Adrenal gland (tissue), 19 donors: ENCODE measurements at regions of chr16 and their contacts with region 1.

Region 1: GRCh38 chr16:88785106-88785924 is at the start of gene PIEZO1:
- DNase-seq: peak; percentile 70 to 80 (median 75)
- H3K4me3 ChIP-seq: peak within 1 kb of the TSS; percentile 31 to 99 (median 52)
- H3K27ac ChIP-seq: peak within 1 kb of the TSS; percentile 47 to 99 (median 79)
- H3K4me1 ChIP-seq: peaks cover 10 to 36% of the 10 kb centered on the region in 2 donors
- H3K27me3 ChIP-seq: no peaks in the 10 kb centered on the region
- CTCF ChIP-seq: peak; percentile 62 to 92 (median 82)
- POLR2A ChIP-seq: peak; percentile 39 to 66
- total RNA-seq, gene PIEZO1: 7.9 to 119 (median 91.6) TPM

Region 2: DNA sequence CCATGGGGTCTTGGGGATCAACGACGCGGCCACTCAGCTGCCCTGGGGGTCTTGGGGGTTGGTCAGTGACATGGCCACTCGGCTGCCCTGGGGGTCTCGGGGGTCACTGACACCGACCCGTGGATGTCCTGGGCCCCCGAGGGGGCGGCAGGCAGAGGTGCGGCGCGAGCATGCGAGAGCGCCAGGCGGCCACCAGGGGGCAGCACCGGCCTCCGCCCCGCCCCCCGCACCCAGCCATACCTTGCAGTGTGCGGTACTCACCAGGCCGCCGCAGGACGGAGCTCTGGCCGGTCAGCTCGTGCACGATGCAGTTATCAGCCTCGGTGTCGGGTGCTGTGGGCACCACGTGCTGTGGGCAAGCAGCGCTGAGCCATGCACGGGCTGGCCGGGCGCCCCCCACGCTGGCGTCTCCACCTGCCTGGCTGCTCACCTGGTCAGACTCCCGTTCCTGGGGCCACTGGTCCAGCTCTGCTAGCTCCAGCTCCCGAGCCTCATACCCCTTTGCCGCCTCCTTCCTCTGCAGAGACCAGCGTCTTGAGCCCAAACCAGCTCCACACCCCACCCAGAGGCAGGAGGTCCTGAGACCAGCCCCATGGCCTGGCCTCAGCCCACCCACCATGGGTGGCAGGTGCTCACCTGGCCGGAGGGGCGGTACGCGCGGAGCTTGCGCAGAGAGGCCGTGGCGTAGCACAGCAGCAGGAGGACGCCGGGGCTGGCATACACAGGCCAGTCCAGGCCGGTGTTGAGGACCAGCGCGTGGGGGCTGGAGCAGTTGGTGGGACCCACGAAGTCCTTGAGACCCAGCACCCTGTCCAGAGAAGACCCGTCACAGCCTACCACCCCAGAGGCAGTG is 47.8 kb before region 1 on chr16:
- intact Hi-C with region 1: loop called (anchors 2 kb)
- DNase-seq: peak; percentile 67 to 90 (median 80)
- H3K4me3 ChIP-seq: no peak overlapping the region
- H3K27ac ChIP-seq: no peak overlapping the region
- H3K4me1 ChIP-seq: peaks cover 0 to 4% of the 10 kb centered on the region in 2 donors
- H3K27me3 ChIP-seq: no peaks in the 10 kb centered on the region
- CTCF ChIP-seq: peak; percentile 91 to 99 (median 97)
- POLR2A ChIP-seq: no peak

Region 3: DNA sequence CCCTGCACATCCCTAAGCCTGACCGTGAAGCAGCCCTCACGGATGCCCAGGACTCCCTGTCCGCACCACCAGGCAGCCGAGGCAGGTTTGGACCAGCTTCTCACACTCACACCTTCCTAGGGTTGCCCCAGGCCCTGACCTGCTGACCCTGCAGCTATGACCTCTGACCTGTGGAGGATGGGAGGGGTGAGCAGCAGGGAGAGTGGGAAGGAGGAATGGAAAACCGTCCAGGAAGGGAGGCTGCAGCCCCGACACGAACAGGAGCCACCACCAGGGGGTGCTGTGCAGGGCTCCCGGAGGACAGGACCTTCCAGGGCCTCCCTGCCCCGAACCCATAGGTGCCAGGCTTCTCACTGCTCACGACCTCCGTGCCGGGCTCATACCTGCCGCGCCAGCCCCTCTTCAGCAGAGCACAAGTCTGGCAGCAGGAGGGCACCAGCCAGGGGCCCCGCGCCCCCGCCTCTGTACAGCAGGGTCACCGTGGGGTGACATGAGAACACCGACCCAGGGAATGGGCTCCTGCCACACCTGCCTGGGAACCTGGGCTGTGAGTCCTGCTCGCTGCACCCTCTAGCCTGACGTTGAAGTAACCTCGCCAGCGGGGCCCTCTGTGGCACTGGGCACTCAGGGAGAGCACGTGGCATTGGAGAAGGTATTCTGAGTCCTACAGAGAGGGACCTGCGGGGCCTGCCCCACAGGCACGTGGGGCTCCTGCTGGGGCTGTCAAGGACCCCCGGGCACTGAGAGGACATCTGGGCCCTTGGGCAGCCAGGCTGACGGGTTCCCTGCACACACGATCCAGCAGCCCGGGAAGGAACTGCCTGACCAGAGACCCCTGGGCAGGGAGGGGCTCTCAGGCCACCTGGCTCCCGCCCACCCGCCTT is 41.4 kb before region 1 on chr16:
- intact Hi-C with region 1: loop called (anchors 2 kb)
- DNase-seq: peak; percentile 71 to 88 (median 83)
- H3K4me3 ChIP-seq: no peak overlapping the region
- H3K27ac ChIP-seq: peak overlapping the region in 1 of 5 donors; percentile 43
- H3K4me1 ChIP-seq: peaks cover 0 to 12% of the 10 kb centered on the region in 2 donors
- H3K27me3 ChIP-seq: no peaks in the 10 kb centered on the region
- CTCF ChIP-seq: peak; percentile 79 to 92 (median 87)
- POLR2A ChIP-seq: no peak